ENCODE measurements at regions of chr3 and their contacts with region 1.

Region 1: GRCh38 chr3:119676771-119677640 is at the start of gene COX17:
- DNase-seq: peak; percentile 97
- H3K4me3 Mint-ChIP-seq: peak within 1 kb of the TSS; percentile 82
- H3K27ac Mint-ChIP-seq: peak within 1 kb of the TSS; percentile 95
- H3K4me1 Mint-ChIP-seq: peaks cover 31% of the 10 kb centered on the region
- H3K27me3 Mint-ChIP-seq: no peaks in the 10 kb centered on the region
- total RNA-seq, gene COX17: 104 to 113 TPM

Region 2: DNA sequence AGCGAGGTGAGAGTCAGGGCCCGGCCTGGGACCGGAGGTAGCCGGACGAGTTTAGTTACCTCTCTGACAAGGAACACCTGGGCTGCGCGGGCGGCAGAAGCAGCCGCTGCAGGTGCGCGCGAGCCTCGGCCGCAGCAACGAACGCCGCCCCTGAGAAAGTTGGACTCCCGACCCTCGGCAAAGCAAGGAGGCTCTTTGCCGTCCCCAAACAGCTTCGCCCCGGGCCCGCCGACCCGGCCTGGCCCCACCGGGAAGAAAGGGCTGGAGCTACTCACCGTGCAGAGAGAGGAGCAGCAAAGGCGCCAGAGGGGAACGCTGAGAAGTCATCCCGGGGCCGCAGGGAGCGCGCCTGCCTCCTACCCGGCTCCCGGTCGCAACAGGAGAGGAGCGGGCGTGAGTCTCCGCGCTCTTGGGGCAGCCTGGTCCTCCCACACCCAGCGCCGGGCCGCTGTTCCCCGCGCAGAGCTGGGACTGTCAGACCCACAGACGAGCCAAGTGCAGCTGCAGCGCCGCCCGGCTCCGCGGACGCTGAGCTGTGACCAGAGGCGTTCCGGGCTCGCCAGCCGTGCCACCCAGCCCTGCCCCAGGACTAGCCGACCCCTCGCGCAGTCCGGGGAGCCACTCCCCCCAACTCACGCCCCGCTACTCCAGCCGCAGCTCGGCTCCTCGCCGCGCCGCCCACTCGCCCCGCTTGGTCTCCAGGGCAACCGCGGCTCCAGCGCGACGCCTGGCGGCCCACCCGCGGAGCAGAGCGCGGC is 642.6 kb before region 1 on chr3 and contains the start of gene IGSF11:
- CTCF ChIA-PET with region 1: no interaction called
- intact Hi-C with region 1: loop called (anchors 5 kb)
- DNase-seq: peak; percentile 67
- H3K4me3 Mint-ChIP-seq: peak within 1 kb of the TSS; percentile 82
- H3K27ac Mint-ChIP-seq: no peak within 1 kb of the TSS
- H3K4me1 Mint-ChIP-seq: peaks cover 6% of the 10 kb centered on the region
- H3K27me3 Mint-ChIP-seq: peaks cover 38% of the 10 kb centered on the region
- total RNA-seq, gene IGSF11: 0.07 to 0.12 TPM

Region 3: GRCh38 chr3:119219069-119219468 is 457.9 kb before region 1 on chr3:
- CTCF ChIA-PET with region 1: interaction called, 3 read pairs
- intact Hi-C with region 1: loop called (anchors 1 kb)
- DNase-seq: peak; percentile 78
- H3K4me3 Mint-ChIP-seq: peak overlapping the region; percentile 63
- H3K27ac Mint-ChIP-seq: peak overlapping the region; percentile 94
- H3K4me1 Mint-ChIP-seq: peaks cover 74% of the 10 kb centered on the region
- H3K27me3 Mint-ChIP-seq: no peaks in the 10 kb centered on the region

Region 4: GRCh38 chr3:119322835-119323722 is 353.9 kb before region 1 on chr3:
- CTCF ChIA-PET with region 1: no interaction called
- intact Hi-C with region 1: loop called (anchors 1 kb)
- DNase-seq: peak; percentile 96
- H3K4me3 Mint-ChIP-seq: peak overlapping the region; percentile 83
- H3K27ac Mint-ChIP-seq: peak overlapping the region; percentile 94
- H3K4me1 Mint-ChIP-seq: peaks cover 47% of the 10 kb centered on the region
- H3K27me3 Mint-ChIP-seq: no peaks in the 10 kb centered on the region

Region 5: GRCh38 chr3:119498186-119498987 is 178.6 kb before region 1 on chr3 and contains the start of gene TIMMDC1:
- CTCF ChIA-PET with region 1: interaction called, 6 read pairs
- intact Hi-C with region 1: loop called (anchors 1 kb)
- DNase-seq: peak; percentile 98
- H3K4me3 Mint-ChIP-seq: peak within 1 kb of the TSS; percentile 99
- H3K27ac Mint-ChIP-seq: peak within 1 kb of the TSS; percentile 94
- H3K4me1 Mint-ChIP-seq: peaks cover 37% of the 10 kb centered on the region
- H3K27me3 Mint-ChIP-seq: no peaks in the 10 kb centered on the region
- total RNA-seq, gene TIMMDC1: 75.6 to 83.8 TPM

Region 6: DNA sequence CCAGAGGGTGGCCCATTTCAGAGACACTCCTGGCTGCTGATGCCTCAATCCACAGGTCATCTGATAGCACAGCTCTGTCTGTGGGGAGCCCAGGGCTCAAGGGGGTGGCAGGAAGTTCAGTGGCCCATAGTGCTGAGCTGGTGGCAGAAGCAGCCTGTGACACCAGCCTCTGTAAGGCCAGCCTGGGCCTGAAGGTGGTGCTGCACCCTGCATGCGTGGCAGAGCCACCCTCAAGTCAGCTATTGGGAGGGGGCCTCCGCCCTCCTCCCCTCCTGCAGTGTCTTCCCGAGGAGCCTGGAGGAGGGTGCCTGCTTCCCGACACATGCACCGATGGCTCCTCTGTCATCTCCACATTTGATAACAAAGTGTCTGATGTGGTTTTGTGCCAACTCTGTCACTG is 76.3 kb before region 1 on chr3:
- CTCF ChIA-PET with region 1: interaction called, 4 read pairs
- intact Hi-C with region 1: loop called (anchors 1 kb)
- DNase-seq: peak; percentile 59
- H3K4me3 Mint-ChIP-seq: no peak overlapping the region
- H3K27ac Mint-ChIP-seq: no peak overlapping the region
- H3K4me1 Mint-ChIP-seq: peaks cover 3% of the 10 kb centered on the region
- H3K27me3 Mint-ChIP-seq: no peaks in the 10 kb centered on the region

Region 7: GRCh38 chr3:119690043-119690656 is 13.1 kb after region 1 on chr3:
- CTCF ChIA-PET with region 1: interaction called, 16 read pairs
- intact Hi-C with region 1: no loop called
- DNase-seq: no peak
- H3K4me3 Mint-ChIP-seq: no peak overlapping the region
- H3K27ac Mint-ChIP-seq: no peak overlapping the region
- H3K4me1 Mint-ChIP-seq: no peaks in the 10 kb centered on the region
- H3K27me3 Mint-ChIP-seq: peaks cover 3% of the 10 kb centered on the region